ENCODE measurements at regions of chr18 and their contacts with region 1.

Region 1: GRCh38 chr18:63161761-63162195 is 157.8 kb downstream of the BCL2 start:
- DNase-seq: peak; percentile 90
- H3K4me3 Mint-ChIP-seq: peak overlapping the region; percentile 78
- H3K27ac Mint-ChIP-seq: peak overlapping the region; percentile 98
- H3K4me1 Mint-ChIP-seq: peaks cover 92% of the 10 kb centered on the region
- H3K27me3 Mint-ChIP-seq: no peaks in the 10 kb centered on the region

Region 2: GRCh38 chr18:62714671-62715435 is 446.9 kb before region 1 on chr18:
- CTCF ChIA-PET with region 1: no interaction called
- POLR2A ChIA-PET with region 1: no interaction called
- intact Hi-C with region 1: loop called (anchors 5 kb)
- DNase-seq: peak; percentile 97
- H3K4me3 Mint-ChIP-seq: peak overlapping the region; percentile 78
- H3K27ac Mint-ChIP-seq: peak overlapping the region; percentile 66
- H3K4me1 Mint-ChIP-seq: peaks cover 31% of the 10 kb centered on the region
- H3K27me3 Mint-ChIP-seq: peaks cover 2% of the 10 kb centered on the region

Region 3: DNA sequence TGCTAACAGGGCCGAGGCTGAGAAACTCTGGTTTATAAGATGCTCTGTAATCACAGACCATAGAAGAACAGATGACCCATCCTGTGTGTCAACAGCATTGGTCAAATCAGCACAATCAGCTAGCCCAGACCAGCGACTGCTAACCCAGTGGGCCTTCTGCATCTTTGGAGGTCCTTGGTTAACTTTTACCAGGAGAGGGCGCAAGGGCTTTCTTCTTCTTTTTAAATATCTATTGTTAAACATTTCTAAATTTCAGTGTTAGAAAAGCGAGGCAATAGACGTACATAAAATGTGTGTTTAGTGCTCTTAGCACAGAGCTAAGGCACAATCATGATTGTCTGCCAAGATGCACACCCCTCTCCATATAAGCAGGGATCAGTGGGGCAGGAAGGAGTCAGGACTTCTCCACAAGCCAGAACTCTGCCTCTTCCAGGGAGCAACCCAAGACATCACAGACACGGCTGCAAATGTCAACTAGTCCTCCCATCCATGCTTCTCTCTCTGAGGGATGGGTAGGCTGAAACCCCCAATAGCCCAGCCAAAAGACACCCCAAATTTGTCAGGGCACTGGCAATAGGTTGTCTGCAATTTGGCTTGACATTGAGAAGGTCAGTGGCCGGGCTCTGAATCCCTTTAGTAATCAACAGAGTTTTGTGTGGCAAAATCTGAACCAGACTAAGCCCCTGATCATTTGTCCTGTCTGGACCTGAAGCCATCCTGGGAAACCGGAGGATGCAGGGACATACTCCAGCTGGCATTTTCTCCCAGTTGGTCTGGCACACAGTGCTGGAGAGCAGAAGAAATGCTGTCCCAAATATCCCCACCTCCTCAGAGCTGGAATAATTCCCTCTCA is 30.4 kb before region 1 on chr18:
- CTCF ChIA-PET with region 1: interaction called, 12 read pairs
- POLR2A ChIA-PET with region 1: interaction called, 3 read pairs
- intact Hi-C with region 1: no loop called
- DNase-seq: peak; percentile 64
- H3K4me3 Mint-ChIP-seq: no peak overlapping the region
- H3K27ac Mint-ChIP-seq: peak overlapping the region; percentile 65
- H3K4me1 Mint-ChIP-seq: peaks cover 30% of the 10 kb centered on the region
- H3K27me3 Mint-ChIP-seq: no peaks in the 10 kb centered on the region

Region 4: GRCh38 chr18:63199743-63200241 is 38.0 kb after region 1 on chr18:
- CTCF ChIA-PET with region 1: interaction called, 12 read pairs
- POLR2A ChIA-PET with region 1: interaction called, 27 read pairs
- intact Hi-C with region 1: loop called (anchors 1 kb)
- DNase-seq: peak; percentile 59
- H3K4me3 Mint-ChIP-seq: no peak overlapping the region
- H3K27ac Mint-ChIP-seq: no peak overlapping the region
- H3K4me1 Mint-ChIP-seq: peaks cover 41% of the 10 kb centered on the region
- H3K27me3 Mint-ChIP-seq: no peaks in the 10 kb centered on the region

Region 5: GRCh38 chr18:63271881-63272299 is 110.1 kb after region 1 on chr18:
- CTCF ChIA-PET with region 1: no interaction called
- POLR2A ChIA-PET with region 1: no interaction called
- intact Hi-C with region 1: no loop called
- DNase-seq: no peak
- H3K4me3 Mint-ChIP-seq: no peak overlapping the region
- H3K27ac Mint-ChIP-seq: no peak overlapping the region
- H3K4me1 Mint-ChIP-seq: peaks cover 75% of the 10 kb centered on the region
- H3K27me3 Mint-ChIP-seq: no peaks in the 10 kb centered on the region

Region 6: DNA sequence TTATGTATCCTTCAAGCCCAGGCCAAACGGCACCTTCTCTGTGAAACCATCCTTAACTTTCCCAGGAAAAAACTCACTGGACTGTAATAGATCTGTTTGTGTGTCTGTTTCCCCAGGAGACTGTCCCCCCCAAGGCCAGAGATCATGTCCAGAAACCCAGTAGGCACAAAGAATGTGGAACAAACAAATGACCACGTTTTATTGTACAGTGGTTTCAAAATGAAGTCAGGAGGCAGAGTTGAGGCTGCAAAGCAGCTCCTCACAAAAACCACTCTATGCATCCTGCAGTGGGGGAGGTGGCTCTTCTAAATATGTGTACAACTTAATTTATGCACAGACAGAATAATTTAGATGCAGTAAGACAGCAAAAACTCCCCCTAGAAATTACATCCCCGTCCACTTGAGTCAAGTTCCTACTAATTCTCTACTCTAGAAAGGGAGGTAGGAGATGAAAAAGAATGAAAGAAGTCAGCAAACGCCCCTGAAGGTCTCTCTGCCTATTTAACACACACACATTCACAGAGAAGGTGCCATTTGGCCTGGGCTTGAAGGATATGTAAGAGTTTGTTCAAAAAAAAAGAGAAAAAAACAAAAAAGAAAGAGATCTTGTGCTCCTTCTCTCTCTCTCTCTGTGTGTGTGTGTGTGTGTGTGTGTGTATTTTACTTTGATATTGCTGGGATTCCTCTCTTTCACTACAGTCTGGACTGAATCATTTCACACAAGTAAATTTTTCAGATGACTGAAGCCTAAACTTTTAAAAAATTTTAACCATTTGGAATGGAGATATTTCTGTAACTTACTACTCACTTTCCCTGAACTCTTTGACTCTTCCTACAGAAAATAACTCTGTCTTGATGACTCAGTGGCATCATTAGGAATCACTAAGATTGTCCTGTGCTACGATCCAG is 138.3 kb after region 1 on chr18:
- CTCF ChIA-PET with region 1: no interaction called
- POLR2A ChIA-PET with region 1: interaction called, 6 read pairs
- intact Hi-C with region 1: loop called (anchors 1 kb)
- DNase-seq: peak; percentile 76
- H3K4me3 Mint-ChIP-seq: peak overlapping the region; percentile 45
- H3K27ac Mint-ChIP-seq: peak overlapping the region; percentile 93
- H3K4me1 Mint-ChIP-seq: peaks cover 86% of the 10 kb centered on the region
- H3K27me3 Mint-ChIP-seq: no peaks in the 10 kb centered on the region

Region 7: DNA sequence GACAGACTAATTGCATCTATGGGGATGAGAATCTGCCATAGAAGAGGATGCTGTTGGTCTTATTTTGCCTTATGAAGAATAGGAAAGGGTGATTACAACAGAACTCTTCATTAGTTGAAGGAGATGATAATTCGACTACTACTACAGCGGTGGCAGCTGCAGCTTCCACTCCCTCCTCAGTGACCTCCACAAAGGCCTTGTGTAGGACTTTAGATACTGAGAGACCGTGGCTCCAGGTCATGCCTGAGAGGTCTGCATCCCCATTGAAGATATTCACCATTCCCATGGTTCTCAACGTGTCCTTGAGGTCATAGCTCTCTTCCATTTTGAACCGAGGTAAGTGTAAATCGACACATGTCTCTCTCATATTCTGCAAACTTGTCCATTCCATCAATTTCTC is 475.9 kb after region 1 on chr18:
- CTCF ChIA-PET with region 1: no interaction called
- POLR2A ChIA-PET with region 1: no interaction called
- intact Hi-C with region 1: no loop called
- DNase-seq: no peak
- H3K4me3 Mint-ChIP-seq: no peak overlapping the region
- H3K27ac Mint-ChIP-seq: no peak overlapping the region
- H3K4me1 Mint-ChIP-seq: no peaks in the 10 kb centered on the region
- H3K27me3 Mint-ChIP-seq: no peaks in the 10 kb centered on the region

Measured in activated CD4-positive, alpha-beta memory T cell treated with anti-CD3 and anti-CD28 coated beads for 36 hours (primary cell).